ENCODE measurements at regions of chr3 and their contacts with region 1.

Region 1: DNA sequence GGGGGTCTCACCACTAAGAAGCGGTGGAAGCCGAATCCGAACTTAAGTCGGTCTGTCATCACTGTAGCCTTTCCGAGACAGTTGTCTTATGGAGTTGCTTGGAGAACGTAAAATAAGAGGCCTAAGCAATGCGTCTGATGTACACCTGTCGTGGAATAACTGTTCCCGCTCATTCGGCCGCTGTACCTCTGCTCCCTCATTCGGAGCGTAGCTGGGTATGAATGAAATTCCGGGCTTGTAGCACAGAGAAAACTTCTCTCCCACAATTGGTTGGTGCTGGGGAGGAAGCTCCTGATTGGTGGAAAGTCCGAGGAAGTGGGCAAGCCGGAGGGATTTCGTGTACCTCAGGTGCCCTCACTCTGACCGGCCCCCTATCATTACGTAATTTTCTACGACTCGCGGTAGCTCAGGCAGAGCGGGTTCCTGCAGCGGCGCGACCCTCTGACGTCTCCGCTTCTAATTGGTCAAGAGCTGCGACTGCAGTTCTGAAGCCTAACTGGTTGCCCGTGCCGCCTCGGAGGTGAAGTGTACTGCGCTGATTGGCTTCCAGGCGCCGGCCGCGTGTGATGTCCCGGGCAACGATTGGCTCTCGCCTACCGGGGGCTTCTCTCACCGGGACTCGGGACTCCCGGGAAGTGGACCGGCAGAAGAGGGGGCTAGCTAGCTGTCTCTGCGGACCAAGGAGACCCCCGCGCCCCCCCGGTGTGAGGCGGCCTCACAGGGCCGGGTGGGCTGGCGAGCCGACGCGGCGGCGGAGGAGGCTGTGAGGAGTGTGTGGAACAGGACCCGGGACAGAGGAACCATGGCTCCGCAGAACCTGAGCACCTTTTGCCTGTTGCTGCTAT is at the start of gene DNAJB11:
- DNase-seq: peak; percentile 100
- ATAC-seq: peak; percentile 92
- H3K4me3 Mint-ChIP-seq: peak within 1 kb of the TSS; percentile 93
- H3K27ac Mint-ChIP-seq: peak within 1 kb of the TSS; percentile 95
- H3K4me1 Mint-ChIP-seq: peaks cover 50% of the 10 kb centered on the region
- H3K27me3 Mint-ChIP-seq: no peaks in the 10 kb centered on the region
- total RNA-seq, gene DNAJB11: 30.9 to 36.6 TPM

Region 2: GRCh38 chr3:186826976-186827731 is 256.8 kb after region 1 on chr3:
- CTCF ChIA-PET with region 1: no interaction called
- POLR2A ChIA-PET with region 1: no interaction called
- intact Hi-C with region 1: loop called in 1 of 2 experiments (anchors 2 kb)
- DNase-seq: peak; percentile 91
- ATAC-seq: peak; percentile 83
- H3K4me3 Mint-ChIP-seq: peak overlapping the region; percentile 82
- H3K27ac Mint-ChIP-seq: no peak overlapping the region
- H3K4me1 Mint-ChIP-seq: peaks cover 23% of the 10 kb centered on the region
- H3K27me3 Mint-ChIP-seq: peaks cover 31% of the 10 kb centered on the region

Measured in activated CD4-positive, alpha-beta T cell treated with anti-CD3 and anti-CD28 coated beads for 36 hours (primary cell).